MCF 10A (cell line): ENCODE measurements at regions of chr5 and their contacts with region 1.

Region 1: GRCh38 chr5:143874312-143874711 is 62.4 kb downstream of the HMHB1 start:
- DNase-seq: no peak
- H3K4me3 Mint-ChIP-seq: no peak overlapping the region
- H3K27ac Mint-ChIP-seq: no peak overlapping the region
- H3K4me1 Mint-ChIP-seq: peaks cover 16% of the 10 kb centered on the region
- H3K27me3 Mint-ChIP-seq: no peaks in the 10 kb centered on the region
- CTCF ChIP-seq: no peak

Region 2: DNA sequence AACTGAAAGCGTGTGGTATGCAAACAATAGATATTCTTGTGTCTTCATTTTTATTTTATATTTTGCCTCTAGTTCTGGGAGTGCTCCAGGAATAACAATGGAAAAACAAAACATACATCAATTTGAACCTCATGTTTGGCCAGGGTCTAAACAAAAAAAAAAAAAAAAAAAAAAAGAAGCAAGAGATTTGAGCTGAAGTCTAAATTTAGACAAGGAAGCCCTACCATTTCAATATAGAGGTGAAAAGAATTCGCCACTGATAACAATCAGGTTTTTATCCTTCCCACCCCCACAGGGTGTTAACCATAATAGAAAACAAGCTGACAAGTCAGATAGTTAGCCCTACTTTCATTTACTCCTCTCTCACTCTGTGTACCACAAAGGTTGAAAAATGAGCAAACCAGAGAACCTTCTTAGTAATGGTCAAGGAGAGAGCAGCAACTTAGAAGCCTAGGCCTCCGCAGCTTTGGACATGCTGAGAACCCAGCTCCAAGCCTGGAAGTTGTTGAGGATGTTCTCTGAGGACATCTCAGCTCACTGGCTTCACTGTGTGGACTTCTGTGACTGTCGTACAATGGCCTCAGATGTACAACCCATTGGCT is 180.6 kb before region 1 on chr5:
- CTCF ChIA-PET with region 1: no interaction called
- POLR2A ChIA-PET with region 1: no interaction called
- intact Hi-C with region 1: no loop called
- DNase-seq: no peak
- H3K4me3 Mint-ChIP-seq: no peak overlapping the region
- H3K27ac Mint-ChIP-seq: no peak overlapping the region
- H3K4me1 Mint-ChIP-seq: no peaks in the 10 kb centered on the region
- H3K27me3 Mint-ChIP-seq: no peaks in the 10 kb centered on the region
- CTCF ChIP-seq: no peak

Region 3: GRCh38 chr5:143782588-143783386 is 91.5 kb before region 1 on chr5:
- CTCF ChIA-PET with region 1: no interaction called
- POLR2A ChIA-PET with region 1: no interaction called
- intact Hi-C with region 1: no loop called
- DNase-seq: no peak
- H3K4me3 Mint-ChIP-seq: no peak overlapping the region
- H3K27ac Mint-ChIP-seq: no peak overlapping the region
- H3K4me1 Mint-ChIP-seq: no peaks in the 10 kb centered on the region
- H3K27me3 Mint-ChIP-seq: no peaks in the 10 kb centered on the region
- CTCF ChIP-seq: no peak

Region 4: GRCh38 chr5:143886651-143887638 is 12.6 kb after region 1 on chr5:
- CTCF ChIA-PET with region 1: interaction called, 7 read pairs
- POLR2A ChIA-PET with region 1: interaction called, 11 read pairs
- intact Hi-C with region 1: no loop called
- DNase-seq: peak; percentile 68
- H3K4me3 Mint-ChIP-seq: peak overlapping the region; percentile 5
- H3K27ac Mint-ChIP-seq: peak overlapping the region; percentile 62
- H3K4me1 Mint-ChIP-seq: peaks cover 51% of the 10 kb centered on the region
- H3K27me3 Mint-ChIP-seq: no peaks in the 10 kb centered on the region
- CTCF ChIP-seq: no peak

Region 5: GRCh38 chr5:143913008-143913752 is 38.9 kb after region 1 on chr5:
- CTCF ChIA-PET with region 1: no interaction called
- POLR2A ChIA-PET with region 1: no interaction called
- intact Hi-C with region 1: loop called (anchors 2 kb)
- DNase-seq: peak; percentile 74
- H3K4me3 Mint-ChIP-seq: no peak overlapping the region
- H3K27ac Mint-ChIP-seq: no peak overlapping the region
- H3K4me1 Mint-ChIP-seq: peaks cover 13% of the 10 kb centered on the region
- H3K27me3 Mint-ChIP-seq: no peaks in the 10 kb centered on the region
- CTCF ChIP-seq: no peak